ENCODE measurements at regions of chr17 and their contacts with region 1.

Region 1: DNA sequence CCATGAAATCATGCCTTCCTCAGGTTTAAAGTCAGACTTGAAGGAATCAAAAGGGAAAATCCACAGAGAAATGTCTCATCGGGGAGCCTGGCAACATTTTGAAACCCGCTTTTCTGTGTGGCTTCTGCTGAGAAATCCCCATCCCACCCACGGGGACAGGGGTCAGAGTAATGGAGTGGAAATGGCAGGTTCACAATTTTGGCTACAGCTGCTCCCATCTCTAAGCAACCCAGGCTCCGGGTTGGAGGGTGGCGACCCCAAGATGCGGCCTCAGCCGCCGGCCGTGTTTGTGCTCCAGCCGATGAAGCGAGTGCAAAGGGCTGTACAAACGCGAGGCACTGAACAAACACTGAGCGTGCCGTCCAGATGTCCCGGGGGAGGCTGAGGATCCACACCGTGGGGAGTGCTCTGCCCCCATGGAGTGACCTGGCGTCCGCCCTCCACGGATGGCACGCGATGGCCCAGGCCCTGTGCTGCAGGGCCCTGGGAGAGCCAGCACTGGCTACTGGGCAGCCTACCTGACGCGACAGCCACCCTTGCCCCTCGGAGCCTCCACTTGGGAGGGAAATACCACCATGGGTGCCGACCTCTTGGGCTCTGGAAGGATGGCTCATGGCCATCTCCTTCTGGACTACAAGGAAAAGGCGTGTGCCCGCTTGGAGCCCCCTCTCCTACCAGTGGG is 22.1 kb downstream of the SLC43A2 start:
- H3K4me3 Mint-ChIP-seq: peak overlapping the region; percentile 61
- H3K27ac Mint-ChIP-seq: peak overlapping the region; percentile 96
- H3K4me1 Mint-ChIP-seq: peaks cover 67% of the 10 kb centered on the region
- H3K27me3 Mint-ChIP-seq: no peaks in the 10 kb centered on the region

Region 2: GRCh38 chr17:1231456-1231855 is 375.0 kb before region 1 on chr17:
- intact Hi-C with region 1: no loop called
- H3K4me3 Mint-ChIP-seq: peak overlapping the region; percentile 96
- H3K27ac Mint-ChIP-seq: peak overlapping the region; percentile 97
- H3K4me1 Mint-ChIP-seq: peaks cover 58% of the 10 kb centered on the region
- H3K27me3 Mint-ChIP-seq: peaks cover 1% of the 10 kb centered on the region

Region 3: DNA sequence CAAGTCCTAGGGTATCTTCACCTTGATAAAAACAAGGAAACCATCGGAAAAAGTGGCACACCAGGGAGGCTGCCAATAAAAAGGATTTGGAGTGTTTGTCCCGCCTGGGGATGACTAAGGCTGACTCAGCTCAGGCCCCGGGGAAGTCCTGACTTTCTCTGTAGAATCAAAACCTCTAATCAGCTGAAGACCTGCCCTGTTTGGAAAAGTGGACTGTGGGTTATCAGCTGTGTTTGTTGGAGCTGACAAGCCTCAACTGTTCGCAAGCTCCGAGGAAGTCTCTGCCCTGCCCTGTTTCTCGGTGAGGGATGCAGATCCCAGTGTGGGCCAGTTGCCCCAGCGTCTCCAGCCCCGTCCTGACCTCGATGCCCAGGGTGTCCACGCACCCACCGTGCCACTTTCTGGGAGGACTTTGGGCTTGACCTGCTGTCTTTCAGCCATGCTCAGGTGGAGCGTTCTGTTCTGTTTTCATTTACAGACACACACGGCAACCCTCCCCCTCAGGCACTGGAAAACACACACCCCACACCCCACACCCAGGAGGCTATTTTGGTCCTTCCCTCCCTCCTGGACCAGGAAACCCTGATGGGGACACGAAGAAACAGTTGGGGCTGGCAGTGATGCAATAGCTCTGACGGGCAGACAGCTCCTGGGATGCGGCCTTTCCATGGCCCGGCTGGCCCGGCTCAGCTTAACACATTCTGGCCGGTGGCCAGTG is 16.3 kb before region 1 on chr17:
- intact Hi-C with region 1: loop called (anchors 1 kb)
- H3K4me3 Mint-ChIP-seq: peak overlapping the region; percentile 26
- H3K27ac Mint-ChIP-seq: peak overlapping the region; percentile 84
- H3K4me1 Mint-ChIP-seq: peaks cover 79% of the 10 kb centered on the region
- H3K27me3 Mint-ChIP-seq: no peaks in the 10 kb centered on the region